ENCODE measurements at regions of chr4 and their contacts with region 1.

Region 1: GRCh38 chr4:68271851-68272756 is 26.6 kb upstream of the TMPRSS11B start:
- DNase-seq: peak in 2 of 9 experiments; percentile 52 to 64
- ATAC-seq: peak; percentile 81
- H3K4me3 ChIP-seq: no peak overlapping the region
- H3K4me3 Mint-ChIP-seq: no peak overlapping the region
- H3K27ac ChIP-seq: no peak overlapping the region
- H3K27ac Mint-ChIP-seq: no peak overlapping the region
- H3K4me1 ChIP-seq: no peaks in the 10 kb centered on the region
- H3K4me1 Mint-ChIP-seq: no peaks in the 10 kb centered on the region
- H3K27me3 ChIP-seq: no peaks in the 10 kb centered on the region
- H3K27me3 Mint-ChIP-seq: peaks cover 9% of the 10 kb centered on the region
- CTCF ChIP-seq: peak; percentile 93

Region 2: DNA sequence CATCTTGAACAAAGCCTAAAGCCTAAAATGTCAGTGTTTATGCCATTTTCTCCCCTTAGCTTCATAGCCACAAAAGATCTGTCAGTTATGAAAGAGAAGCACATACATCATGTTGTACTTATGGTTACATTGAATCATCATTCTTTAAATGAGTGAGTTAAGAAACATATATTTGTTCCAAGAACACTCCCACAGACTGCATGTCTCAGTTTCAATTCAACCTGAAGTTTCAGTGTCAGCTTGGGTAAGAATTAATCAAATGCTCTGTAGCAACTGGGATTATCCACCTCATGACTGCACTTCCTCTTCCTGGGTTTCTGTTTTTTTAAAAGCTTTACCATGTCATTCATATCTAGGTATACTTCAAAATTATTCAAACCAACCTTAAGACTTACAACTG is 22.7 kb before region 1 on chr4:
- CTCF ChIA-PET with region 1: interaction called, 3 read pairs
- POLR2A ChIA-PET with region 1: no interaction called
- intact Hi-C with region 1: loop called in 1 of 2 experiments (anchors 1 kb)
- DNase-seq: no peak
- ATAC-seq: no peak
- H3K4me3 ChIP-seq: no peak overlapping the region
- H3K4me3 Mint-ChIP-seq: no peak overlapping the region
- H3K27ac ChIP-seq: no peak overlapping the region
- H3K27ac Mint-ChIP-seq: no peak overlapping the region
- H3K4me1 ChIP-seq: no peaks in the 10 kb centered on the region
- H3K4me1 Mint-ChIP-seq: no peaks in the 10 kb centered on the region
- H3K27me3 ChIP-seq: no peaks in the 10 kb centered on the region
- H3K27me3 Mint-ChIP-seq: peaks cover 8% of the 10 kb centered on the region
- CTCF ChIP-seq: no peak

Region 3: DNA sequence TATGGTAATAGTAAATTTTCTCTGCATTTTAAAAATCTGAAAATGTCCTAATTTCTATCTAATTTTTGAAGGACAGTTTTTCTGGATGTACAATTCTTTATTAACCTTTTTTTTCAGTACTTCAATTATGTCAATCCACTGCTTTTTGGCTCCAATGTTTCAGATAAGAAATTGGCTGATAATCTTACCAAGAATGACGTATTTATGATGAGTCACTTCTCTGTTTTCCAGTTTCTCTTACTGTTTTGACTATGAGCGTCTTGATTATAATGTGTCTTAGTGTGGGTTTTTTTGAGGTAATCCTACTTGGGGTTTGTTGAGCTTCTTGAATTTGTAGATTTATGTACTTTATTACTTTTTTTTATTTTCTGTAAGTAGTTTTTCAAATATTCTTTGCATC is 895.2 kb after region 1 on chr4:
- CTCF ChIA-PET with region 1: no interaction called
- POLR2A ChIA-PET with region 1: no interaction called
- intact Hi-C with region 1: loop called (anchors 5 kb)
- DNase-seq: no peak
- ATAC-seq: no peak
- H3K4me3 ChIP-seq: no peak overlapping the region
- H3K4me3 Mint-ChIP-seq: no peak overlapping the region
- H3K27ac ChIP-seq: no peak overlapping the region
- H3K27ac Mint-ChIP-seq: no peak overlapping the region
- H3K4me1 ChIP-seq: no peaks in the 10 kb centered on the region
- H3K4me1 Mint-ChIP-seq: no peaks in the 10 kb centered on the region
- H3K27me3 ChIP-seq: no peaks in the 10 kb centered on the region
- H3K27me3 Mint-ChIP-seq: no peaks in the 10 kb centered on the region
- CTCF ChIP-seq: no peak

Region 4: DNA sequence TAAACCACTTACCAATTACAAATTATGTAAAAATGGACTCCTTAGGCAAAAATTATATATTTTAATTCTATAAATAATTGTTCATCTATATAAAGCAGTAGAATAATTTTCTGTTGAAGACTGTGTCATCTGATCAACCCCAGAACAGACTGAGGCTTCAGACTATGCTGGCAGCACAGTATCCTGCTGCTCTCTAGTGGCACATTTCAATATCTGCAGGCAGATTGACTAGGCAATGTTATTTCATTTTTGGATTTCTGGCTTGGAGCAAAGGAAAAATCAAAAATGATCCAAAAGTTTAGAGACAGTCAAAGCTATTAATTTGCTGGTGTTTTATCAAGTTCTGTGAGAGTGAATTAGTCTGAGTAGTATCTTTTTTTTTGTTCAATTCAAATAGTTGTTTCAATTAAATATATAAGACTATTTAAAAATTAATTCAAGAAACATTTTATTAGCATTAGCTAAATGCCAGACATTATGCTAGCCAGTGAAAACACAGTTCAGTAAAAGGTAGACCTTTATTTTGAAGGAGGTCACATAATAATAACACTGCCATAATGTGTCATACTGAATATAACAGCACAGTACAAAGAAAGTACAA is 1609.2 kb after region 1 on chr4:
- CTCF ChIA-PET with region 1: no interaction called
- POLR2A ChIA-PET with region 1: no interaction called
- intact Hi-C with region 1: loop called in 1 of 2 experiments (anchors 5 kb)
- DNase-seq: peak in 4 of 9 experiments; percentile 13 to 57 (median 24)
- ATAC-seq: peak; percentile 78
- H3K4me3 ChIP-seq: no peak overlapping the region
- H3K4me3 Mint-ChIP-seq: no peak overlapping the region
- H3K27ac ChIP-seq: no peak overlapping the region
- H3K27ac Mint-ChIP-seq: no peak overlapping the region
- H3K4me1 ChIP-seq: no peaks in the 10 kb centered on the region
- H3K4me1 Mint-ChIP-seq: no peaks in the 10 kb centered on the region
- H3K27me3 ChIP-seq: no peaks in the 10 kb centered on the region
- H3K27me3 Mint-ChIP-seq: no peaks in the 10 kb centered on the region
- CTCF ChIP-seq: peak; percentile 90

Measured in CD8-positive, alpha-beta T cell (primary cell).